Dendritic cell treated with granulocyte-macrophage colony-stimulating factor and Interleukin-4, amounts not matched to agents 40 ng/mL and 50 ng/mL, for 4 days (primary cell): ENCODE measurements at regions of chr4 and their contacts with region 1.

Region 1: DNA sequence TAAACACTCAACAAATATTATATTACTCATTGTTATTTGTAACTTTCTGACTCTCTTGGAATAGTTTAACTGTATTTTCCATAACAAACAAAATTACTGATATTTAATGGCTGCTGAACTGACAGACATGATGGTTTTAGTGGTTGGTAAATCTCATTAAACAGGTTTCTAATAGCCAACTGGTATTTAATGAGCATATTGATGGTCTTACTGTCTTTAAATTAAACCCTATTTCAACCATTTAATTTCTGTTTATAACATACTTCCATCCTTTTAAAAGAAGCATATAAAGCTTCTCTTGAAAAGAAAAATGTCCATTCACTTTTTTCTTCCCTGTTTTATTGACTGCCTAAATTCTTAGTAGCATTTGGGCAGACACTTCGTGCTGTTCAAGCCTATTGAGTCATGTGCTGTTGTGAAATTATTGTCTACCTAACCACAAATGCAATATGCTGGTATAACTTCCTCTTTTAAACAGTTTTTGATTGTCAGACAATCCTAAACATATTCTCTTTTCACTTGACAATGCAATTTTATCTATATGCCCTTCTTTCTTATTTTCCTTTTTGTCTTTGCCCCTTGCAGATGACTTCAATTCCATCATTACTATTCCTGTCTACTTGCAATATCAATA is 163.9 kb upstream of the SLC7A11 start:
- H3K4me3 Mint-ChIP-seq: peak overlapping the region; percentile 14
- H3K27ac Mint-ChIP-seq: peak overlapping the region; percentile 87
- H3K4me1 Mint-ChIP-seq: peaks cover 52% of the 10 kb centered on the region
- H3K27me3 Mint-ChIP-seq: no peaks in the 10 kb centered on the region

Region 2: DNA sequence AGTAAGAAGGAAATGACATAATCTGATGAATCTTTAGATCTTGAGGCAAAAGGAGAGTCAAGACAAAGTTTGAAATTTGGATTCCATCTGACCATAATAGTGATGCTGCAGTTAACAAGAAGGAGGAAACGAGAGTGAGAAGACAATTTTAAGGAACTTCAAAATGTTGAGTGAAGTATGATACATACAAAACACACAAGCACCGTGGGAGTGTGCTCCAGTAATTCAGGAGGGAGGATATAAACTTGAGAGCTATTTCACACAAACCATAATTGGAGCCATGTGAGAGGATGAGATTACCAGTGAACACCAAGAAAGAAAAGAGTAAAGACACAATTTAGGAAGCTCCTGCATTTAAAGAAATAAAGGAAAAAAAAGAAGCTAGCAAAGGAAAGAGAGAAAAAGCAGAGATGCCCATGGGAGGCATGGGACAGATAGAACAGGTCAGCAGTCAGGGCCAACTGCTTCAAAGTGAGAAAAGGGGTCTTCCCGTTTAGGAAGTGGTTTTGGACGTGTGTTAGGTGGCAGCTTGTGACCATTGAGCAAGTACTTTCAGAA is 13.2 kb before region 1 on chr4:
- intact Hi-C with region 1: loop called (anchors 2 kb)
- H3K4me3 Mint-ChIP-seq: peak overlapping the region; percentile 7
- H3K27ac Mint-ChIP-seq: peak overlapping the region; percentile 88
- H3K4me1 Mint-ChIP-seq: peaks cover 44% of the 10 kb centered on the region
- H3K27me3 Mint-ChIP-seq: no peaks in the 10 kb centered on the region

Region 3: GRCh38 chr4:138996090-138996489 is 590.0 kb after region 1 on chr4:
- intact Hi-C with region 1: no loop called
- H3K4me3 Mint-ChIP-seq: no peak overlapping the region
- H3K27ac Mint-ChIP-seq: no peak overlapping the region
- H3K4me1 Mint-ChIP-seq: peaks cover 23% of the 10 kb centered on the region
- H3K27me3 Mint-ChIP-seq: no peaks in the 10 kb centered on the region